Activated CD4-positive, alpha-beta T cell treated with anti-CD3 and anti-CD28 coated beads, Interleukin-2, amount 10 ng/mL, durations not matched to agents 24 days and 14 days (primary cell): ENCODE measurements at regions of chr19 and their contacts with region 1.

Region 1: GRCh38 chr19:5790573-5791520 is at the start of gene DUS3L:
- DNase-seq: peak; percentile 98
- H3K4me3 Mint-ChIP-seq: peak within 1 kb of the TSS; percentile 96
- H3K27ac Mint-ChIP-seq: peak within 1 kb of the TSS; percentile 100
- H3K4me1 Mint-ChIP-seq: peaks cover 12% of the 10 kb centered on the region
- H3K27me3 Mint-ChIP-seq: no peaks in the 10 kb centered on the region
- total RNA-seq, gene DUS3L: 85.8 and 89.8 TPM in 2 replicates

Region 2: GRCh38 chr19:5622463-5623396 is 168.1 kb before region 1 on chr19 and contains the starts of genes SAFB and SAFB2:
- intact Hi-C with region 1: loop called (anchors 5 kb)
- DNase-seq: peak; percentile 100
- H3K4me3 Mint-ChIP-seq: peak within 1 kb of the TSS; percentile 100
- H3K27ac Mint-ChIP-seq: peak within 1 kb of the TSS; percentile 100
- H3K4me1 Mint-ChIP-seq: peaks cover 55% of the 10 kb centered on the region
- H3K27me3 Mint-ChIP-seq: peaks cover 3% of the 10 kb centered on the region
- total RNA-seq, gene SAFB: 142 and 143 TPM in 2 replicates
- total RNA-seq, gene SAFB2: 97.6 and 101 TPM in 2 replicates

Region 3: DNA sequence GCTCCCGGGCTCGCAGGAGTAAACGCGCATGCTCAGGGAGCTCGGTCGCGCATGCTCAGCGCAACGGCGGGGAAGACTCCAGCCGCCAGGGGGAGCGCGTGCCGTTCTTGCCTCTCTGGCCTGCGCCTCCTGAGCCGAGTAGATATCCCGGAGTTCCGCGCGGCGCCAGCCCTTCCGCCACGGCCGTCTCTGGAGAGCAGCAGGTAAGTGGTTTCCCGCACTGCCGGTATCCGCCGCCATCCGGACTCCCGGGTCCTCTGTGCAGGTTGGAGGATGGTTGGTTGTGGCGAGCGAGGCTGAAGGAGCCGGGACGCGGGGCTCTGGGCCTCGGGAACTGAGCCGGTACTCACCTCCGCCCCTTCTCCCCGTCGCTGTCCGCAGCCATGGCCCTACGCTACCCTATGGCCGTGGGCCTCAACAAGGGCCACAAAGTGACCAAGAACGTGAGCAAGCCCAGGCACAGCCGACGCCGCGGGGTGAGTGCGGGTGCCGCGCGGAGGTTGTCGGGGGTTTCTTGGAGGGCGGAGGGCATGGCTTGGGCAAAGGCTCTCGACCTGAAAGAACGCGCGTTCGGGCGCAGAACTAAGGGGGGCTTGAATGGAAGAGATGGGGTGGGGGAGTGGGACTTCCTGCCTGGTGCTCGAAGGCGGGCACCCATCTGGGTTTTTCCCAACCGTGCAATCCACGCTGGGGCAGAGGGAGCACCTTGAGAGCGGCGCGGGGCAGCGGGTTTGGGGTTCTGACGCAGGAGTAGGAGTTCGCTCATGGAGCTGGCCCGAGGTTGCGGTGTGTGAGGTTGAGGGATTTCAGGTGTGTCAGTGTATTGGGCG is 100.5 kb before region 1 on chr19 and contains the start of gene RPL36:
- intact Hi-C with region 1: loop called (anchors 2 kb)
- DNase-seq: peak; percentile 100
- H3K4me3 Mint-ChIP-seq: peak within 1 kb of the TSS; percentile 100
- H3K27ac Mint-ChIP-seq: peak within 1 kb of the TSS; percentile 98
- H3K4me1 Mint-ChIP-seq: peaks cover 23% of the 10 kb centered on the region
- H3K27me3 Mint-ChIP-seq: no peaks in the 10 kb centered on the region
- total RNA-seq, gene RPL36: 1,117 and 1,132 TPM in 2 replicates

Region 4: GRCh38 chr19:5803752-5804515 is 13.1 kb after region 1 on chr19:
- intact Hi-C with region 1: loop called (anchors 1 kb)
- DNase-seq: peak; percentile 99
- H3K4me3 Mint-ChIP-seq: peak overlapping the region; percentile 81
- H3K27ac Mint-ChIP-seq: peak overlapping the region; percentile 70
- H3K4me1 Mint-ChIP-seq: peaks cover 18% of the 10 kb centered on the region
- H3K27me3 Mint-ChIP-seq: peaks cover 41% of the 10 kb centered on the region

Region 5: GRCh38 chr19:5864725-5865486 is 74.1 kb after region 1 on chr19:
- intact Hi-C with region 1: no loop called
- DNase-seq: no peak
- H3K4me3 Mint-ChIP-seq: no peak overlapping the region
- H3K27ac Mint-ChIP-seq: peak overlapping the region; percentile 24
- H3K4me1 Mint-ChIP-seq: no peaks in the 10 kb centered on the region
- H3K27me3 Mint-ChIP-seq: no peaks in the 10 kb centered on the region

Region 6: DNA sequence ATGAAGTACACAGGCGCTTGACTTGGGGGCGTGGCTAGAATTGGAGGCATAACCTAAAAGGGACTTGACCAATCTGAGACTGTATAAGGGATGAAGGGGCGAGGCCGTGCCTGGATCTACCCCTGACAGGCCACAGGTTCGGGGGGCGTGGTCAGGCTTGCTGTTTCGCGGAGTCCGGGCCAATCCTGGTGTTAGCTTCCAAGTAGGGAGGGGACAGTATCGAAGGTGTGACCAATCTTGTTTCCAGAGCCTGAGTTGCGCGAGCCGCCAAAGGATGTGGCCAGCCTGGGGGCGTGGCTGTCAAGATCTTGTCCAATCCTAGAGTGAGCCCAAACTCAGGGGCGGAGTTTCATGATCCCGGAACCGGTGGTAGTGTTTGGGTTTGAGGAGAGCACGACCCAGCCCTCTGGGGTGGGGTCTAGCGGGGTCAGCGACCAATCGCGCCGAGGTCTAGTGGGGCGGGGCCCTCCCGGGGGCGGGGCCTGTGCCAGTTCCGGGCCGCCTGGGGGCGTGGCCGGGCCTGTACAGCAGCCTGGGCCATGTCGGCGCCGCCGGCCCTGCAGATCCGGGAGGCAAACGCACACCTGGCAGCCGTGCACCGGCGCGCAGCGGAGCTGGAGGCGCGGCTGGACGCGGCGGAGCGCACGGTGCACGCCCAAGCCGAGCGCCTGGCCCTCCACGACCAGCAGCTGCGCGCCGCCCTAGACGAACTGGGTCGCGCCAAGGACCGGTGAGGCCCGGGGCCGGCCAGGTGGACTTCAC is 113.7 kb after region 1 on chr19 and contains the start of gene VMAC:
- intact Hi-C with region 1: loop called (anchors 1 kb)
- DNase-seq: peak; percentile 100
- H3K4me3 Mint-ChIP-seq: peak within 1 kb of the TSS; percentile 91
- H3K27ac Mint-ChIP-seq: peak within 1 kb of the TSS; percentile 99
- H3K4me1 Mint-ChIP-seq: peaks cover 29% of the 10 kb centered on the region
- H3K27me3 Mint-ChIP-seq: no peaks in the 10 kb centered on the region
- total RNA-seq, gene VMAC: 2.7 and 3.2 TPM in 2 replicates

Region 7: GRCh38 chr19:6048808-6049405 is 258.1 kb after region 1 on chr19:
- intact Hi-C with region 1: no loop called
- DNase-seq: peak; percentile 93
- H3K4me3 Mint-ChIP-seq: no peak overlapping the region
- H3K27ac Mint-ChIP-seq: no peak overlapping the region
- H3K4me1 Mint-ChIP-seq: peaks cover 4% of the 10 kb centered on the region
- H3K27me3 Mint-ChIP-seq: peaks cover 7% of the 10 kb centered on the region